ENCODE measurements at regions of chr17 and their contacts with region 1.

Region 1: DNA sequence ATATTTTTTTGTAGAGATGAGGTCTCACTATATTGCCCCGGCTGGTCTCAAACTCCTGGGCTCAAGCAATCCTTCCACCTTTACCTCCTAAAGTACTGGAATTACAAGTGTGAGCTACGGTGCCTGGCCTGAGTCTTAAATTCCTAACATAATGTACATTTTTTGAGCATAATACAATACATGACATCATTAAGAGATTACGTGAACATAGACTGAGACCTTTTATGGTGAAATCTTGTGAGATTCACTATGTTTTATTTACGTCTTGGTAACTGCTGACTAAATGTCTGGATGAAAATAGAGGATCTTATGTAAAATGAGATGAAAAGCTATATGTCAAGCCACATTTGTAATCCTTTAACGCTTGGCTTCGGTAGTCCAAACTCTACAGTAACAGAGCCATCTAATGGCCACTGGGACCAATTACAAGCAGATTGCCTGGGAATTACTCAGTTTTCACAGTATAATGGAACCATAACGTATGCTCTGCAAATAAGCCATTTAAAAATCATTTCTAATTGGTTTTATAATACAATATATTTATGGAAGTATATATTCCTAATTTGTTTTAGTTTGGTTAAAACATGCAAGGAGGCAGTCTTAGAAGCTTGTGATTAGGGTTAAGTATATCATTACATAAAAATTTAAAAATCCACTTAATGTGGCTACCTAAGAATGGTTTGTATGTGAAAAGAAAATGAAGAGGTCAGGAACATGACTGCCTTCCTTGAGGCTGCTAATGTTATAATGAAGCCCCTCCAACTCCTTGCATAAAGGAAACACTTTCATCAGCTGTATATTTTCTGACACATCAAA is 8.1 kb upstream of the EFCAB13 start:
- DNase-seq: peak; percentile 92
- H3K4me3 ChIP-seq: no peak overlapping the region
- H3K27ac ChIP-seq: peak overlapping the region; percentile 91
- H3K27me3 ChIP-seq: no peaks in the 10 kb centered on the region
- CTCF ChIP-seq: peak; percentile 82

Region 2: DNA sequence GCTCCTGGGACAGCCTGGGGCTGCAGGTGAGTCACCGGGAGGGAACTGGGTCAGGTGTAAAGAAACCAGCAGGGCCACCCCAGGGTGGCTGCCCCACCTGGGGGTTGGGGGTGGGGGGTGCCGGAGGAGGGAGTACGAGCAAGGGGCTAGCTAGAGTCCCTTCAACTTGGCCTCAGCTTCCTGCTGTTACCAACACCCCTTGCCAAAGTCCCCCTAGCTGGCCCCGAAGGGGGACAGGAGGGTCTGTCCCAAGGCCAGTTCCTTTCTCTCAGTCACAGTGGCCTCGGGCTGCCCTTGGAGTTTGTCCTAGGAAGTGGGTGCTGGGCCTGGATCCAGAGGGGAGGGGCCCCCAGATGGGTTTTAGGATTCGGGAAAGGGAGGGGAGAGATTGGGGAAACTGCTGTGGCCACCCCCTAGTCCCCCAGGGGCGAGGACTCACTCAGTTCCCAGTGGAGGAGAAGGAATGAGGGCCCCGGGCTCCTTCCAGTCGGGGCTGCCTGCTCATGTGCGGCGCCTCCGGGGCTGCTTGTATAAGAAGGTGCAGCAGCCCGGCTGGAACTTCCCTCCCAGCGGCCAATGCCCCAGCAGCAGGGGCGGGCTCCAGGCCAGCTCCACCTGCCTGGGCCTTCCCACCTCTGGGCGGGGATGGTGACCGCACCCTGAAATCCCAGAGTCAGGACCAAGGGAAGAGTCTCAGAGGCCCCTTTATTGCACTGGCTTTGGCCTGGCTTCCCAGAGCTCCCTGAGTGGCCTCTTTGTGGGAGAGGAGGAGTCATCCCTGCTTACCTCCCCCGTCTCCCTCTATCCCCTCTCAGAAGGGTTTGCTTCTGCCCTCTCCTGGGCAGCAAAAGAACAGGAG is 1890.3 kb before region 1 on chr17:
- CTCF ChIA-PET with region 1: no interaction called
- POLR2A ChIA-PET with region 1: no interaction called
- DNase-seq: peak; percentile 50
- H3K4me3 ChIP-seq: no peak overlapping the region
- H3K27ac ChIP-seq: no peak overlapping the region
- H3K27me3 ChIP-seq: peaks cover 29% of the 10 kb centered on the region
- CTCF ChIP-seq: peak; percentile 71

Region 3: DNA sequence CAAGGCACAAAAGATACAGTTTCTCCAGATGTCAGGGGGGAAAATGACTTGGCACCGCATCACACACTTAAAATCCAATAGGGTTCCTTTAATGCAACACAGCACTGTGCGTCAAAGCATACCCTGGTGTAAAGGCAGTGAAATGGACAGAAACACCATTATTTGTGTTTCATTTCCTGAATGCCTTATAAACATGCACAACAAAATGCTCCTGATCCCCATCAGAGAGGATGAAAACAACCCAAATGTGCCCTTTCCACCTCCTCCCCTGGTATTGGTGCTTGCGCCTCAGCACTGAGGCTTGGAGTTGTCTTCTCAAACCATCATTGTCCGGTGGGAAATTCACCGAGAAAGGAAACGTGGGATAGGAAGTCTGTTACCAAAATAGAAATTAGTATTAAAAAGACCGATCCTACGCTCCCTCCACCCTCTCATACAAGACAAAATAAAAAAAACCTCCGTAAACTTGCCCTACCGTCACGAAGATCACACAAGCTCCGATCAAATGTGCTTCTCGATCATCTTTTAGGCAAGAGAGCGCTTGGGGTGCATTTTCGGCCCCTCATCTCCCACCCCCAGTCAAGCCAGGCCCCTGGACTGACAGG is 127.3 kb before region 1 on chr17:
- CTCF ChIA-PET with region 1: interaction called, 10 read pairs
- POLR2A ChIA-PET with region 1: no interaction called
- DNase-seq: no peak
- H3K4me3 ChIP-seq: peak overlapping the region; percentile 78
- H3K27ac ChIP-seq: peak overlapping the region; percentile 96
- H3K27me3 ChIP-seq: no peaks in the 10 kb centered on the region
- CTCF ChIP-seq: no peak